ENCODE measurements at regions of chr11 and their contacts with region 1.

Region 1: GRCh38 chr11:18115360-18116127 is 9.7 kb upstream of the SAAL1 start:
- DNase-seq: peak; percentile 61
- H3K4me3 ChIP-seq: no peak overlapping the region
- H3K27ac ChIP-seq: no peak overlapping the region
- H3K4me1 ChIP-seq: no peaks in the 10 kb centered on the region
- H3K27me3 ChIP-seq: no peaks in the 10 kb centered on the region
- CTCF ChIP-seq: peak; percentile 80 to 92

Region 2: GRCh38 chr11:18075444-18075843 is 40.1 kb before region 1 on chr11:
- CTCF ChIA-PET with region 1: no interaction called
- dilution Hi-C with region 1: loop called (anchors 5 kb)
- in situ Hi-C with region 1: no loop called
- intact Hi-C with region 1: no loop called
- DNase-seq: no peak
- H3K4me3 ChIP-seq: no peak overlapping the region
- H3K27ac ChIP-seq: no peak overlapping the region
- H3K4me1 ChIP-seq: no peaks in the 10 kb centered on the region
- H3K27me3 ChIP-seq: no peaks in the 10 kb centered on the region
- CTCF ChIP-seq: no peak

Region 3: GRCh38 chr11:18203723-18204122 is 88.2 kb after region 1 on chr11:
- CTCF ChIA-PET with region 1: interaction called, 48 read pairs
- dilution Hi-C with region 1: no loop called
- in situ Hi-C with region 1: no loop called
- intact Hi-C with region 1: loop called (anchors 1 kb)
- DNase-seq: no peak
- H3K4me3 ChIP-seq: no peak overlapping the region
- H3K27ac ChIP-seq: no peak overlapping the region
- H3K4me1 ChIP-seq: no peaks in the 10 kb centered on the region
- H3K27me3 ChIP-seq: no peaks in the 10 kb centered on the region
- CTCF ChIP-seq: peak; percentile 34 to 37

Region 4: GRCh38 chr11:18534230-18534629 is 418.7 kb after region 1 on chr11:
- CTCF ChIA-PET with region 1: interaction called, 4 read pairs
- dilution Hi-C with region 1: no loop called
- in situ Hi-C with region 1: no loop called
- intact Hi-C with region 1: loop called (anchors 5 kb)
- DNase-seq: no peak
- H3K4me3 ChIP-seq: no peak overlapping the region
- H3K27ac ChIP-seq: no peak overlapping the region
- H3K4me1 ChIP-seq: no peaks in the 10 kb centered on the region
- H3K27me3 ChIP-seq: no peaks in the 10 kb centered on the region
- CTCF ChIP-seq: no peak

Region 5: DNA sequence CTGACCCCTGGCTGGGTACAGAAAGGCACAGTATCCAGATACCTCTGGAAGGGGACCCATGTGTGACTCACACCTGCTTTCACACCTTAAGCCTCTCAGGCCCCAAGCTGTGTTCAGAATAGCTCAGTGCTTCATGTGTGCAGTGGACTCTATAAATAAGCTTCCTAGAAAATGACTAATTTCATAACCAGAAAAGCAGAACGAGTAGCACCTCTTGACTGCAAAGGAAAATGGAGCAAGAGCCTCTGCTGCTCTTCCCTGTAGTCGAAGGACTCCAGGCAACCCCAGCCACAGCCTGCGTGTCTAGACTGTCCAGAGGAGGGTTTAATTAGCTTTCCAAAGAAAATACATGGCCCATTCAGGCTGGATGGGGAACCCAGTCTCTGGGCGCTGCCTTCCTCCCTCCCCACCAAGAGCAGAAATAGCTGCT is 652.9 kb after region 1 on chr11:
- CTCF ChIA-PET with region 1: interaction called, 3 read pairs
- dilution Hi-C with region 1: no loop called
- in situ Hi-C with region 1: no loop called
- intact Hi-C with region 1: loop called (anchors 1 kb)
- DNase-seq: no peak
- H3K4me3 ChIP-seq: no peak overlapping the region
- H3K27ac ChIP-seq: no peak overlapping the region
- H3K4me1 ChIP-seq: peaks cover 9% of the 10 kb centered on the region
- H3K27me3 ChIP-seq: no peaks in the 10 kb centered on the region
- CTCF ChIP-seq: no peak

Measured in mammary epithelial cell (primary cell).